Activated T-helper 1 cell treated with anti-CD3 and anti-CD28 coated beads, Interleukin-12 subunit alpha, Interleukin-12 subunit beta, Interleukin-2, Interleukin-4 antibody, amounts not matched to agents 30 ng/mL and 10 ng/mL and 1 ng/mL, durations not matched to agents 14 hours and 24 hours and 36 hours (primary cell): ENCODE measurements at regions of chr7 and their contacts with region 1.

Region 1: GRCh38 chr7:584122-584465 is 64.4 kb upstream of the PDGFA start:
- DNase-seq: peak; percentile 83
- H3K4me3 Mint-ChIP-seq: peak overlapping the region; percentile 82
- H3K27ac Mint-ChIP-seq: peak overlapping the region; percentile 87
- H3K4me1 Mint-ChIP-seq: peaks cover 35% of the 10 kb centered on the region
- H3K27me3 Mint-ChIP-seq: peaks cover 2% of the 10 kb centered on the region

Region 2: DNA sequence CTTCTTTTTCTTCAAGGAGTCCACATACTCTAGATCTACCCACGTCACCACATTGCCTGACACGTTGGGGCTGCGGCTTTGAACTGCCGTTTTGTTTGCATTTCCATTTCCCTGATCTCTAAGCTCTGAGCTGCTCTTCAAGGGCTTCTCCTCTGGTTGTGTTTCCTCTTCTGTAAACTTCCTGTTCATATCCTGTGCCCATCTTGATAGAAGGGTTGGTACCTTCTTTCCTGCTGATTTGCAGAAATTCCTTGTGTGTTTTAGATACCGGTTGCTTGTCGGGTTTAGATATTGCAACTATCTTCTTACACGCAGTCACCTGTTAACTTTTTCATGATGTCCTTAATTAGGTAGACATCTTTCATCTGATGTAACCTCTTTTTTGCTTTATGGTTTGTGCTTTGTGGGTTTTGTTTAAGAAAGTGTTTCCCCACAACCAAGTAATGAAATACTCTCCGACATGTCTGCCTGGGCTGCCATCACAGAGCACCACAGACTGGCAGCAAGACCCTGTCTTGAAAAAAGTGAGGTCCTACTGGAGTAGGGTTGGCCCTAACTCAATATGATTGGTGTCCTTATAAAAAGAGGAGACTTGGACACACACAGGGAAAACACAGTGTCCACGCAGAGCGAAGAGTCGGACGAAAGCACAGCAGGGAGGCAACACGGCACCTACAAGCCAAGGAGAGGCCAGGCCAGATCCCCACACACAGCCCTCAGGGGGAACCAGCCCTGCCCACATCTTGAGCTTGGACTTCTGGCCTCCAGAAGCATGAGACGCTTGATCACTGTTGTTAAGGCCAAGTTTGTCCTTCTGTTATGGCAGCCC is 34.7 kb after region 1 on chr7:
- intact Hi-C with region 1: loop called (anchors 1 kb)
- DNase-seq: peak; percentile 71
- H3K4me3 Mint-ChIP-seq: peak overlapping the region; percentile 82
- H3K27ac Mint-ChIP-seq: peak overlapping the region; percentile 99
- H3K4me1 Mint-ChIP-seq: peaks cover 48% of the 10 kb centered on the region
- H3K27me3 Mint-ChIP-seq: no peaks in the 10 kb centered on the region

Region 3: DNA sequence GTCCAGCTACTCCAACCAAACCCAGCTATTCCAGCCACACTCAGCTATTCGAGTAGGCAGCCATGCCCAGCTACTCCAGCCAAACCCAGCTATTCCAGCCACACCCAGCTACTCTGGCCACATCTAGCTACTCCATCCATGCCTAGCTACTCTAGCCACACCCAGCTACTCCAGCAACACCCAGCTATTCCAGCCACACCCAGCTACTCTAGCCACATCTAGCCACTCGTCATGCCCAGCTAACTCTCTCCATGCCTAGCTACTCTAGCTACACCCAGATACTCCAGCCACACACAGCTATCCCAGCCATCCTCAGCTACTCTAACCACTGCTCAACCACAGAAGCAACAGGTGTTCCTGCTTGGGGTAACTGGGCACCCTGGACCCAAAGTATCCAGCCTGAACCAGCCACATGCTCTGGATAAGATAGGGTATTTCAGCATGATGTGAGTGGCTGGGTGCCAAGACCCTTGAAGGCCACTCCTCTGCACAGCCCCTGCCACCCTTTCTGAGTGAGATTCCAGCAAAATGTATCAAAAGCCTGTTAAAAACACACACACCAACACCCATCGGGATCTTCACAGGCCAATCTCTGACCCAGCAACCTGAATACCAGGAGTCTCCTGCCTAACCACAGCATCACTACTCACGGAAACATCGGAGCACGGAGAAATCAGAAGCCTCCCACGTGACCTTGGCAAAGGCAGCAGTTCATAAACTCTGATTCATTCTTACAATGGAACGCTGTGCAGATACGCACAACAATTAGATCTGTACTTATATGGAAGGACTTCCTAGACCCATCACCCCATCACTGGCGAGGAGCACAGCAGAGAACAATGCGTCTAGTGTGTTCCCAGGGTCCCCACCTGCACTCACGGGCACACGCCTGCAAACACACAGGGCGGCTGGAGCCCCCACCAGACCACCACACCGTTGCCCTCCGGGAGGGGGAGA is 90.6 kb after region 1 on chr7:
- intact Hi-C with region 1: no loop called
- DNase-seq: no peak
- H3K4me3 Mint-ChIP-seq: no peak overlapping the region
- H3K27ac Mint-ChIP-seq: peak overlapping the region; percentile 15
- H3K4me1 Mint-ChIP-seq: no peaks in the 10 kb centered on the region
- H3K27me3 Mint-ChIP-seq: no peaks in the 10 kb centered on the region